ENCODE measurements at regions of chr12 and their contacts with region 1.

Region 1: GRCh38 chr12:102484428-102484958 is 4.1 kb upstream of the IGF1 start:
- DNase-seq: peak in 1 of 2 experiments; percentile 68
- H3K4me3 ChIP-seq: no peak overlapping the region
- H3K27ac ChIP-seq: no peak overlapping the region
- H3K4me1 ChIP-seq: no peaks in the 10 kb centered on the region
- H3K27me3 ChIP-seq: no peaks in the 10 kb centered on the region
- CTCF ChIP-seq: peak; percentile 55 to 70 (median 69)
- EP300 ChIP-seq: no peak
- POLR2A ChIP-seq: no peak
- RAD21 ChIP-seq: peak; percentile 75 to 81

Region 2: GRCh38 chr12:102169922-102170621 is 314.4 kb before region 1 on chr12:
- CTCF ChIA-PET with region 1: interaction called, 12 read pairs
- POLR2A ChIA-PET with region 1: no interaction called
- DNase-seq: no peak
- H3K4me3 ChIP-seq: no peak overlapping the region
- H3K27ac ChIP-seq: no peak overlapping the region
- H3K4me1 ChIP-seq: no peaks in the 10 kb centered on the region
- H3K27me3 ChIP-seq: no peaks in the 10 kb centered on the region
- CTCF ChIP-seq: peak in 2 of 3 experiments; percentile 42 to 76; a peak in 2 of 4 replicates
- EP300 ChIP-seq: no peak
- POLR2A ChIP-seq: no peak
- RAD21 ChIP-seq: peak; percentile 57 to 61

Region 3: GRCh38 chr12:102300824-102301461 is 183.6 kb before region 1 on chr12:
- CTCF ChIA-PET with region 1: interaction called, 17 read pairs
- POLR2A ChIA-PET with region 1: no interaction called
- DNase-seq: no peak
- H3K4me3 ChIP-seq: no peak overlapping the region; a peak in 1 of 8 replicates
- H3K27ac ChIP-seq: no peak overlapping the region
- H3K4me1 ChIP-seq: no peaks in the 10 kb centered on the region
- H3K27me3 ChIP-seq: no peaks in the 10 kb centered on the region
- CTCF ChIP-seq: peak in 2 of 3 experiments; percentile 79 to 80; a peak in 3 of 4 replicates
- EP300 ChIP-seq: no peak
- POLR2A ChIP-seq: no peak
- RAD21 ChIP-seq: peak; percentile 73 to 76

Region 4: GRCh38 chr12:102401087-102401486 is 83.4 kb before region 1 on chr12:
- CTCF ChIA-PET with region 1: no interaction called
- POLR2A ChIA-PET with region 1: no interaction called
- DNase-seq: no peak
- H3K4me3 ChIP-seq: no peak overlapping the region
- H3K27ac ChIP-seq: no peak overlapping the region
- H3K4me1 ChIP-seq: peaks cover 0 to 3% (median 0%) of the 10 kb centered on the region in 4 experiments; a peak in 1 of 7 replicates
- H3K27me3 ChIP-seq: no peaks in the 10 kb centered on the region
- CTCF ChIP-seq: no peak
- EP300 ChIP-seq: no peak
- POLR2A ChIP-seq: no peak
- RAD21 ChIP-seq: no peak

Region 5: DNA sequence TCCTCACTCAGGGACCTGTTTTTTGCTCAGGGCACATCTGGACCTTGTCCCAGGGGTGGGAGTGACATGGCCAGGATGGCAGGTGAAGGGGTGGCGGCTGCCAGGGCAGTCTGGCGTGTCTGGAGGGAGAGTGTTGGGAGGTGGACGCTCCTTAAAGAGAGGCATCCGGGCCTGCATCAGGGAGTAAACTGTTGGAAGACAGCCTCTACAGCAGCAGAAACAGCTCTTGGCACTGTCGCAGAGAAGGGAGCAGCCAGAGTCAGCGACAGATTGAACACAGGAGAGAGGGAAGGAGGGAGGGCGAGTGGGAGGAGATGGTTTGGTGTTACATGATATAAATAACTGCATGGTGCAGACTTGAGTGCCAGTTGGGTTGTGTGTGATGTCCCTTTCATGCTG is 57.0 kb before region 1 on chr12:
- CTCF ChIA-PET with region 1: no interaction called
- POLR2A ChIA-PET with region 1: no interaction called
- DNase-seq: no peak
- H3K4me3 ChIP-seq: no peak overlapping the region
- H3K27ac ChIP-seq: no peak overlapping the region
- H3K4me1 ChIP-seq: no peaks in the 10 kb centered on the region; a peak in 1 of 7 replicates
- H3K27me3 ChIP-seq: no peaks in the 10 kb centered on the region
- CTCF ChIP-seq: no peak
- EP300 ChIP-seq: no peak
- POLR2A ChIP-seq: no peak
- RAD21 ChIP-seq: no peak

Region 6: DNA sequence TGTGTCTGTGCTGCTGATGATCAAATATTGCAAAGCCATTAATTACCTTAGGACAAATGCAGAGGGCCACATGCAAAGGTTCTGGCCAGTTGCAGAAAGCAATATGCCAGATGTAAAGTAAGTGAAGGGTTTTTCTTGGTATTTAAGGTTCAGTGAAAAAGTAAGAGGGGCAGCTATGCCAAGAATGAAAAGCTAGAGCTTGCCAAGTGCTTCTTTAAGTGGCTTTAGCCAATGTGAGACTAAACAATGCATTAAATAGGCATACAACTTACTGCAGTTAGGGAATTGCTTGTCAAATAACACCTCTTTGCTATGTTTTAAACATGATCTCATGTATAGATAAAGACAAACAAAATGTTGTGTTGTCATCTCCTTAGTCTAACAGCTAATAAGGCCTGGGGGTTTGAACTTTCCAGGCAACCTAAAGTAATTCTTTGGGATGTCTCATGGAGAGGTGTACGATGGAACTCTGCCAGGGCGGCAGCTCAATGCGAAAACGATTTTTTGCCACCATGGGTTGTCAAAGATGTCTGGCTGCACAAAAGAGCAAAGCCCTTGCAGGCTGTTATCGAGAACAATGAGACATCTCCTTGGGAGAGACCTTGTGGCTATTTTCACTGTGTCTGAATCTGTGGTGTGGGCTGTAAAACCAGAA is 16.1 kb before region 1 on chr12:
- CTCF ChIA-PET with region 1: interaction called, 24 read pairs
- POLR2A ChIA-PET with region 1: interaction called, 4 read pairs
- DNase-seq: no peak
- H3K4me3 ChIP-seq: no peak overlapping the region
- H3K27ac ChIP-seq: no peak overlapping the region
- H3K4me1 ChIP-seq: no peaks in the 10 kb centered on the region
- H3K27me3 ChIP-seq: no peaks in the 10 kb centered on the region
- CTCF ChIP-seq: no peak
- EP300 ChIP-seq: no peak
- POLR2A ChIP-seq: no peak
- RAD21 ChIP-seq: no peak

Region 7: DNA sequence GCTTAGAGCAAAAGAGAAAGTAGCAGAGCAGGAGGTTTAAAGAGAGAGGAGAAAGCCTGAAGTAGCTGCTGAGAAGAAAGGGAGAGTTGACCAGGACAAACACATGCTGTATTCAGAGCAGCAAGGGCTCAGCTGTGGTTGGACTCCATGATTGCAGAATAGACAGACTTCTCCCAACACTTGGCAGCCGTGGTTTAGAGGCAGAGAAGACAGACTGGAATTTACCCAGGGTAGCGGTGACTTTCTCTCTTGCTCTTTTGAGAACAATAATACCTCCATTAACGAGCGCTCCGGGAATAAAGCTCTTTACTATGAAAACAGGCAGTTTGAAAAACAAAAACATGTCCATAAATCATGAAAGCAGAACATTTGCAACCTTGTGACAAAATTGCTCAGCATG is 17.3 kb after region 1 on chr12:
- CTCF ChIA-PET with region 1: interaction called, 11 read pairs
- POLR2A ChIA-PET with region 1: no interaction called
- DNase-seq: no peak
- H3K4me3 ChIP-seq: no peak overlapping the region
- H3K27ac ChIP-seq: no peak overlapping the region
- H3K4me1 ChIP-seq: no peaks in the 10 kb centered on the region
- H3K27me3 ChIP-seq: no peaks in the 10 kb centered on the region
- CTCF ChIP-seq: no peak
- EP300 ChIP-seq: no peak
- POLR2A ChIP-seq: no peak
- RAD21 ChIP-seq: no peak

Region 8: GRCh38 chr12:102629262-102629888 is 144.9 kb after region 1 on chr12:
- CTCF ChIA-PET with region 1: no interaction called
- POLR2A ChIA-PET with region 1: no interaction called
- DNase-seq: no peak
- H3K4me3 ChIP-seq: no peak overlapping the region
- H3K27ac ChIP-seq: no peak overlapping the region
- H3K4me1 ChIP-seq: no peaks in the 10 kb centered on the region
- H3K27me3 ChIP-seq: no peaks in the 10 kb centered on the region
- CTCF ChIP-seq: no peak
- EP300 ChIP-seq: no peak
- POLR2A ChIP-seq: no peak
- RAD21 ChIP-seq: no peak

Region 9: GRCh38 chr12:102702447-102703114 is 218.1 kb after region 1 on chr12:
- CTCF ChIA-PET with region 1: interaction called, 10 read pairs
- POLR2A ChIA-PET with region 1: no interaction called
- DNase-seq: peak in 1 of 2 experiments; percentile 65
- H3K4me3 ChIP-seq: no peak overlapping the region
- H3K27ac ChIP-seq: no peak overlapping the region
- H3K4me1 ChIP-seq: no peaks in the 10 kb centered on the region
- H3K27me3 ChIP-seq: no peaks in the 10 kb centered on the region
- CTCF ChIP-seq: peak in 2 of 3 experiments; percentile 58 to 61; a peak in 3 of 4 replicates
- EP300 ChIP-seq: no peak
- POLR2A ChIP-seq: no peak
- RAD21 ChIP-seq: peak; percentile 58 to 65